Calu3 (cell line): ENCODE measurements at regions of chr12 and their contacts with region 1.

Region 1: DNA sequence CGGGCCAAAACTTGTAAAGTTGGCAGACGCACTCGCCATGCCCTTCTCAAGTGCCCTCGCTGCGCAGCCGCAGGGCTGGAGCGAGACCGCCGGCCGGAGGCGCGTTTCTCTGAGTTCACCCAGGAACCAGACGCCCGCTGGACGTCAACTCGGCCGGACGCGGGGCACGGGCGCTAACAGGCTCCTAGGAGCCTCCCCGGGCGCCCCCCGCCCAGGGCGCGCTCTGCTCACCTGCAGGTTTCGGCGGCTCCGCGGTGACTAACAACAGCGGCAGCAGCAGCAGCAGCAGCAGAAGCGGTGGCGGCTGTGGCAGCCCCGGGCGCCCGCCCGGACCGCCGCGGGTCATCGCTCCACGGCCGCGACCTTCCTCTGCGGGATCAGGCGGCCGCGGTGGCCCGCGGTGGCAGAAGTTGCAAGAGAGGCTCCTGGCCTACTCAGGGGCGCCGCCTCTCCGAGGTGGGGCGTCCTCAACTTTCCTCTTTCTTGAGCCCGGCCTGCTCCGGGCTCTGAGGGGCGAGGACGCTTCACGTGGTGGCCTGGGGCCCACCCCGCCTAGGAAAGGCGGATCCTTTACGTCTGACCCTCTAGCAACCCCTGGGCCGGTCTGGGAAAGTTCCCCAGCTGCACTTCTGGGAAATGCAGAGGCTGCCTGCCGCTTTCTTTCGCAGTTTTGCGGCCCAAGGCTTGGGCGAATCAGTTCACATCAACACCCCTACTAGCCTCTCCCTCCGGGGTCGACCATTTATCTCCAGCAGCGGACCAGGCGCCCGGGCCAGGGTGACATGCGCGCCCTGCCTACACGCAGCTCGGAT is at the start of gene PLBD1:
- DNase-seq: peak; percentile 69
- H3K4me3 Mint-ChIP-seq: peak within 1 kb of the TSS; percentile 95
- H3K27ac Mint-ChIP-seq: peak within 1 kb of the TSS; percentile 97
- H3K4me1 Mint-ChIP-seq: peaks cover 37% of the 10 kb centered on the region
- H3K27me3 Mint-ChIP-seq: no peaks in the 10 kb centered on the region
- CTCF ChIP-seq: no peak
- total RNA-seq, gene PLBD1: 75.3 and 98.1 TPM in 2 replicates

Region 2: GRCh38 chr12:14618983-14619382 is 51.4 kb after region 1 on chr12:
- CTCF ChIA-PET with region 1: interaction called, 13 read pairs
- intact Hi-C with region 1: loop called (anchors 5 kb)
- DNase-seq: peak; percentile 25
- H3K4me3 Mint-ChIP-seq: peak overlapping the region; percentile 24
- H3K27ac Mint-ChIP-seq: peak overlapping the region; percentile 35
- H3K4me1 Mint-ChIP-seq: peaks cover 27% of the 10 kb centered on the region
- H3K27me3 Mint-ChIP-seq: no peaks in the 10 kb centered on the region
- CTCF ChIP-seq: no peak